Activated naive CD4-positive, alpha-beta T cell treated with anti-CD3 and anti-CD28 coated beads, Interleukin-2, amount 10 ng/mL, durations not matched to agents 7 days and 5 days (primary cell): ENCODE measurements at regions of chr1 and their contacts with region 1.

Region 1: DNA sequence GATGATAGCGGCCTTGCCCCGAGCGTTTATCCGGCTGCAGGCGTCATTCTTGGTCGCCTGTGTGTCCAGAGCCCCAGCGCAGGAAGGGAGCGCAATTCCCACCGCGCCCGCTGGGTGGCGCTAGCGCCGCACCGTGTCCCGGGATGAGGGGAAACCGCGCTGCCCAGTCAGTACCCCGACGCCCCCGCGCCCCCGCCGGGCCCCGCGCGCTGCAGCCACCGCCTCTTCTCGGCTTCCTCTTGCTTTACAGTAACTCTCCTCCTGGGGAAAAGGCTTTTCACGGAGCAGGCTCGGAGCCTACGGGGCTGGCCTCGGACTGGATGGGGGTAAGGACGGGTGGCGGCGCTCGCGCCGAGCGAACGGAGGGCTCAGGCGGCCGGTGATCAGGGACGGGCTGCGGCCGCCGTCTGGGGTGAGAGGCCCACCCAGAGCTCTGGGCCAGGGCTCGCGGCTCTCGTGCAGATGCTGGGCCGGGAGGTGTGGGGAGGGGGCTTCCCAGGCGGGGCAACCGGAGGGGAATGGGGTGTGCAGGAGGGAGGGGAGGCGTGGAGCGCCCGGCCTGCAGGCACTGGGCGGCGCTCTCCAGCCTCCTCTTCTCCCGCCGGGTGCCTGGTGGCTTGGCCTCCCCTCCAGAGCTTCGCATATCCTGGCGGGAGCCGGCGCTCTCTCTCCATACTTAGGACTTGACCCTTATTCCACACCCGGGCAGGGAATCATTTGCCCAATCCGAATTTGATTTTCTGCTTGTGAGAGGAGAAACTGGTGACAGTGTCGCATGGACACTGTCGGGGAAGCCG is 29.8 kb downstream of the TEX35 start:
- DNase-seq: peak; percentile 89
- H3K4me3 Mint-ChIP-seq: peak overlapping the region; percentile 86
- H3K27ac Mint-ChIP-seq: peak overlapping the region; percentile 84
- H3K4me1 Mint-ChIP-seq: peaks cover 9% of the 10 kb centered on the region
- H3K27me3 Mint-ChIP-seq: no peaks in the 10 kb centered on the region

Region 2: DNA sequence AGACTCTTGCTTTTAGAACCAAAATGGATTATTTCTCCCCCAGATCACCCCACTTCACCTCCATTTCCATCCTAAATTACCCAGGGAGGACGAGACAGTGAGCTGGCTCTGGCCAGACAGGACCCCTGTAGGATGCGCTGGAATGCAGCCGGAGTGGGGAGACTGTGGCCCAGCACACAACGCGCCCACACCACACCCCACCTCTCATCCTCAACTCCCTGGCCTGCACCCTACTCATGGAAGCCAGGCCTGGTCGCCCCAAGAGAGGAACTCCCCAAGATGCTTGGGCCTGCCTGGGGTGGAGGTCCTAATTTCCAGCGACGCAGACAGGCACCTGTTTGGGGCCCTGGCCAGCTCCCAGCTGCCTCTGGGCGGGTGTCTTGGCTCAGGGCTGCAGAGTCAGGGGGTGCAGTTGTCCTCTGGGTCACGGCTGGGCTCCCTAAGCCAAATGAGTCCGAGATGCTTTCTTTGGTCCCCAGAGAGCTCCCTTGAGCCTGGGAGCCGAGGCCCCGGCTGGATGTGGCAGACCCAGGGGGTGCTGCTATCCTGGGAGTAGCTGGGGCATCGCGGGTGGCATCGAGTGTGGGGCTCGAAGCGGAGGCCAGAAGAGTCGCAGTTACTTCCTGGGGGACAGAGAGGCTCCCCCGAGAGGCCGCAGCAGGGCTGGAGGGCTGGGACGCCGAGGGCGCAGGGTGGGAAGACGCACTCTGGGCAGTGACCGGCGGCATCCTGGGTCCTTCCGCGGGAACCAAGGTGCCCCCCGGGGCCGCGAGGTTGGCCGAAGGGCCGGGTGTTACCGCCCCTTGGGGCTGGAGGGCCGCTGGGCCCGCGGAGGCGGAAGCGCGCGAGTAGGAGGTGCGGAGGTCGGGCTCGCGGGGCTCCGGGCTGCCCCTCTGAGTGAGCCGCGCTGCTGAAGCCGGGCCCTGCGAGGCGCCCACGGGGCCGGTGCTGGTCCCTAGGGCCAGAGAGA is 56.4 kb before region 1 on chr1:
- CTCF ChIA-PET with region 1: no interaction called
- DNase-seq: no peak
- H3K4me3 Mint-ChIP-seq: no peak overlapping the region
- H3K27ac Mint-ChIP-seq: no peak overlapping the region
- H3K4me1 Mint-ChIP-seq: no peaks in the 10 kb centered on the region
- H3K27me3 Mint-ChIP-seq: peaks cover 29% of the 10 kb centered on the region

Region 3: GRCh38 chr1:178532392-178532791 is 10.4 kb before region 1 on chr1:
- CTCF ChIA-PET with region 1: interaction called, 11 read pairs
- DNase-seq: peak; percentile 81
- H3K4me3 Mint-ChIP-seq: no peak overlapping the region
- H3K27ac Mint-ChIP-seq: no peak overlapping the region
- H3K4me1 Mint-ChIP-seq: peaks cover 3% of the 10 kb centered on the region
- H3K27me3 Mint-ChIP-seq: no peaks in the 10 kb centered on the region

Region 4: DNA sequence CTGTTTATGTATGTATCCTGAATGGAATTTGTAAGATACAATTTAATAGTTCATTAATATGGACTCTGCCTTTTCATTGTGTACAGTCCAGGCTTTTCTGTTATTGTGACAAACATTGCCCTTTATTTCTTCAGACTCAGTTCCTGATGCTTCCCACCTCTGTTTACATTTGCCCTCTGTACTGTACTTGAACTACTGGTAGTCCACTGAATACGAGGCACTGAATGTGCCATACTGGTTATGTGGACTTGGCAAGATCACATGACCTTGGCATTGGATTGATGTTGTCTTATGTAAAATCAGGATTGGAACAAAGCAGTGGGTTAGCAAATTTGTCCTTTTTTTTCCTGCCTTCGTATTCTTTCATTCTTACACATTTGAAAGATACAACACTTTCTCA is 210.1 kb after region 1 on chr1:
- CTCF ChIA-PET with region 1: interaction called, 17 read pairs
- DNase-seq: no peak
- H3K4me3 Mint-ChIP-seq: no peak overlapping the region
- H3K27ac Mint-ChIP-seq: no peak overlapping the region
- H3K4me1 Mint-ChIP-seq: no peaks in the 10 kb centered on the region
- H3K27me3 Mint-ChIP-seq: no peaks in the 10 kb centered on the region